Caco-2 (cell line): ENCODE measurements at regions of chr6 and their contacts with region 1.

Region 1: DNA sequence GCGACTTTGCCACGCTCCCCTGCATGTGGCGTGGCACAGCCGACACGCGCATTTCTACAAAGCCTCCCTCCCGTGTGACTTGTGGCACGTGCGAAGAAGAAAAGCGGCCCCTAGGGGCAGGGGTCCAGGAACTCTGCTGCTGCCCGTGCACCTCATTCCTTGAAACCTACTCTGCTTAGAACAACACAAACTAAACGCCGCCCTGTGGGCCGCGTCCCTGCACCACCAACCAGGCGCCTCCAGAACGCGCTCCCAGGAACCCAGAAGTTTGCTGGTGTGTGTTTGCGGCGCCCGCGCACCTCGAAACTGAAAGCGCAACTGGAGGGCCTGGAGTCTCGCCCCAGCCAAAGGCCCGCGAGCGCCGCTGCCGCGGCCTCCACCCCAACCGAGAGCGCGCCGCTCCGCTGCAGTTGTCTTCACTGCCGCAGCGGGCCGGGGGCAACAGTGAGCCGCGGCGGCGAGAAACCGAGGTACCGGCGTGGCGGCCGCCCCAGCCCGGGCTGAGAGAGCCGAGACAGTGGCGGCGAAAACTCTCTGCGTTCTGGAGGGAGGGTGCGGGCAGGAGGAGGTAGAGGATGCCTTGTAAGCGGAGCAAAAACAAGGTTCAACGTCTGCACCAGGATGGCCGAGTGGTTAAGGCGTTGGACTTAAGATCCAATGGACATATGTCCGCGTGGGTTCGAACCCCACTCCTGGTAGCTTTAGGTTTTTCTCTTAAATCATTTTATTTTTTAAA is 65.8 kb downstream of the STX11 start:
- DNase-seq: peak; percentile 95 to 96
- H3K4me3 ChIP-seq: peak overlapping the region; percentile 70
- H3K4me3 Mint-ChIP-seq: peak overlapping the region; percentile 86
- H3K27ac Mint-ChIP-seq: peak overlapping the region; percentile 90
- H3K4me1 ChIP-seq: peaks cover 7% of the 10 kb centered on the region
- H3K4me1 Mint-ChIP-seq: peaks cover 34% of the 10 kb centered on the region
- H3K27me3 ChIP-seq: no peaks in the 10 kb centered on the region
- H3K27me3 Mint-ChIP-seq: peaks cover 6% of the 10 kb centered on the region
- CTCF ChIP-seq: peak; percentile 57 to 77

Region 2: DNA sequence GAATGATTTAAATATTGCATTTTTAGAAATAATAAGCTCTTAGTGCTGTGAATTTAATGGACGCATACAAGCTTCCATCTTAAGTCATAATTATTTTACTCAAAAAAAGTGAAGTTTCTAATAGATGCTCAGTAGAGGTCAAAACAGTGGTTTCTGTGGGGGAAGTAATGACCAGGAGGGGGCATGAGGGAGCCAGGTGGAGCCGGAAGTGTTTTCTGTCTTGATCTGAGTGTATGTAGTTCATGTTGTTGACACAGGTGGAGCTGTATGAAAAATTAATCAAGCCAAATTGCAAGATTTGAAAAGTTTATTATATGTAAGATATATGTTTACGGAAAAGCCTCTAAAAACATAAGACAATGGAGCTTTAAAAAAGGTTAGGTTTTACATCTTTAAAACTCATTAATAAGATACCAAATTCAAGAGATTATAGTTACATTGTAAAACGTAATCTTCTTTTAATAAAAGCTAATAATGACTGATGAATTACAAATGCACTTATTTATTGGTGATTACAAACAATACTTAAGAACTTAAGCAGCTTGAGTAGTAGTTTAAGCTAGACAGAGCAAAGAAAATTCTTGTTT is 276.0 kb before region 1 on chr6:
- CTCF ChIA-PET with region 1: no interaction called
- POLR2A ChIA-PET with region 1: no interaction called
- intact Hi-C with region 1: no loop called
- DNase-seq: peak; percentile 55 to 76
- H3K4me3 ChIP-seq: no peak overlapping the region
- H3K4me3 Mint-ChIP-seq: no peak overlapping the region
- H3K27ac Mint-ChIP-seq: no peak overlapping the region
- H3K4me1 ChIP-seq: no peaks in the 10 kb centered on the region
- H3K4me1 Mint-ChIP-seq: no peaks in the 10 kb centered on the region
- H3K27me3 ChIP-seq: no peaks in the 10 kb centered on the region
- H3K27me3 Mint-ChIP-seq: peaks cover 6% of the 10 kb centered on the region
- CTCF ChIP-seq: peak; percentile 85 to 93

Region 3: GRCh38 chr6:144104898-144105487 is 111.1 kb before region 1 on chr6:
- CTCF ChIA-PET with region 1: interaction called, 15 read pairs
- POLR2A ChIA-PET with region 1: no interaction called
- intact Hi-C with region 1: loop called (anchors 1 kb)
- DNase-seq: peak in 1 of 2 experiments; percentile 67
- H3K4me3 ChIP-seq: no peak overlapping the region
- H3K4me3 Mint-ChIP-seq: no peak overlapping the region
- H3K27ac Mint-ChIP-seq: no peak overlapping the region
- H3K4me1 ChIP-seq: no peaks in the 10 kb centered on the region
- H3K4me1 Mint-ChIP-seq: peaks cover 16% of the 10 kb centered on the region
- H3K27me3 ChIP-seq: no peaks in the 10 kb centered on the region
- H3K27me3 Mint-ChIP-seq: no peaks in the 10 kb centered on the region
- CTCF ChIP-seq: peak; percentile 55 to 81

Region 4: GRCh38 chr6:144195679-144196270 is 20.3 kb before region 1 on chr6:
- CTCF ChIA-PET with region 1: no interaction called
- POLR2A ChIA-PET with region 1: no interaction called
- intact Hi-C with region 1: loop called (anchors 1 kb)
- DNase-seq: peak in 1 of 2 experiments; percentile 60
- H3K4me3 ChIP-seq: no peak overlapping the region
- H3K4me3 Mint-ChIP-seq: no peak overlapping the region
- H3K27ac Mint-ChIP-seq: peak overlapping the region; percentile 48
- H3K4me1 ChIP-seq: peaks cover 12% of the 10 kb centered on the region
- H3K4me1 Mint-ChIP-seq: peaks cover 6% of the 10 kb centered on the region
- H3K27me3 ChIP-seq: no peaks in the 10 kb centered on the region
- H3K27me3 Mint-ChIP-seq: no peaks in the 10 kb centered on the region
- CTCF ChIP-seq: no peak

Region 5: GRCh38 chr6:144334131-144334708 is 118.1 kb after region 1 on chr6:
- CTCF ChIA-PET with region 1: no interaction called
- POLR2A ChIA-PET with region 1: no interaction called
- intact Hi-C with region 1: loop called (anchors 5 kb)
- DNase-seq: no peak
- H3K4me3 ChIP-seq: no peak overlapping the region
- H3K4me3 Mint-ChIP-seq: no peak overlapping the region
- H3K27ac Mint-ChIP-seq: no peak overlapping the region
- H3K4me1 ChIP-seq: peaks cover 52% of the 10 kb centered on the region
- H3K4me1 Mint-ChIP-seq: peaks cover 60% of the 10 kb centered on the region
- H3K27me3 ChIP-seq: no peaks in the 10 kb centered on the region
- H3K27me3 Mint-ChIP-seq: no peaks in the 10 kb centered on the region
- CTCF ChIP-seq: no peak

Region 6: GRCh38 chr6:144482142-144482541 is 266.0 kb after region 1 on chr6:
- CTCF ChIA-PET with region 1: interaction called, 7 read pairs
- POLR2A ChIA-PET with region 1: no interaction called
- intact Hi-C with region 1: loop called (anchors 1 kb)
- DNase-seq: peak; percentile 66 to 73
- H3K4me3 ChIP-seq: no peak overlapping the region
- H3K4me3 Mint-ChIP-seq: no peak overlapping the region
- H3K27ac Mint-ChIP-seq: no peak overlapping the region
- H3K4me1 ChIP-seq: no peaks in the 10 kb centered on the region
- H3K4me1 Mint-ChIP-seq: no peaks in the 10 kb centered on the region
- H3K27me3 ChIP-seq: no peaks in the 10 kb centered on the region
- H3K27me3 Mint-ChIP-seq: no peaks in the 10 kb centered on the region
- CTCF ChIP-seq: peak; percentile 58 to 77